Naive thymus-derived CD4-positive, alpha-beta T cell (primary cell): ENCODE measurements at regions of chr15 and their contacts with region 1.

Region 1: GRCh38 chr15:74540761-74541493 is at the start of gene ARID3B:
- DNase-seq: peak; percentile 72 to 95 (median 90)
- ATAC-seq: peak; percentile 94
- H3K4me3 ChIP-seq: peak within 1 kb of the TSS; percentile 98
- H3K4me3 Mint-ChIP-seq: peak within 1 kb of the TSS; percentile 90 to 99 (median 98)
- H3K27ac ChIP-seq: peak within 1 kb of the TSS; percentile 87
- H3K27ac Mint-ChIP-seq: peak within 1 kb of the TSS; percentile 84 to 99 (median 94)
- H3K4me1 ChIP-seq: peaks cover 18 to 34% of the 10 kb centered on the region in 2 donors
- H3K4me1 Mint-ChIP-seq: peaks cover 46 to 64% (median 55%) of the 10 kb centered on the region in 7 donors
- H3K27me3 ChIP-seq: no peaks in the 10 kb centered on the region
- H3K27me3 Mint-ChIP-seq: no peaks in the 10 kb centered on the region
- total RNA-seq, gene ARID3B: 29.5 to 45.4 (median 36.8) TPM

Region 2: DNA sequence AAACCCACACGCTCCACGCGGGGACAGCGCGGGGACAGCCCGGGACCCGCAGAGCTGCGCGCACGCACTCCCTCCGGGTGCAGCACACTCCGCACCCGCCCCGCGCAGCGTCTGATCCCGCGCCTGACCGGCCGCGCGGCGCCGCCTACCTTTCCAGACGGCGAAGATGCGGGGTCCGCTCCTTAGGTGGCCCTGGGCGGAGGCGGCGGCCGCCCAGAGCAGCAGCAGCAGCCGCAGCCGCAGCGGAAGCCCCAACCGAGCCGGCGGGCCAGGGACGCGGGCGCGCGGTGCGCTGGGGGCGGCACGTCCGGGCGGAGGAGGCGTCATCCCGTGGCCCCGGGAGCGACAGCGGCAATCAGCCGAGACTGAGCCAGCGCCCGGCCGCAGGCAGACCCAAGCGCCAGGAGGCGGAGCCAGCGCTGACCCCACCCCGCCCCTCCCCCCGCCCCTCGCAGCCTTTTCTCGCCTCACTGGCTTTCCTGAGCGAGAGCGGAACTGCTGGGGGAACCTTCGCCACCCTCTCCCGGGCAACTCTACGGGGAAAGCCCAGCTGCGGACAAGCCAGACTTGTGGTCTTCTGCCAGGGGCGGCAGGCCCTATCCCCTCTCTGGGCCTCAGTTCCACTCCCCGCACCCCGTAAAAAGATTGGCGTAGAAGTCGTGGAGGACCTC is 107.2 kb before region 1 on chr15 and contains the start of gene SEMA7A:
- CTCF ChIA-PET with region 1: no interaction called
- POLR2A ChIA-PET with region 1: no interaction called
- intact Hi-C with region 1: loop called in 1 of 2 experiments (anchors 10 kb)
- DNase-seq: peak; percentile 32 to 90 (median 53)
- ATAC-seq: peak; percentile 87
- H3K4me3 ChIP-seq: peak within 1 kb of the TSS; percentile 50
- H3K4me3 Mint-ChIP-seq: peak within 1 kb of the TSS; percentile 72 to 88 (median 78)
- H3K27ac ChIP-seq: no peak within 1 kb of the TSS
- H3K27ac Mint-ChIP-seq: peak within 1 kb of the TSS in 4 of 9 donors; percentile 65 to 89 (median 72)
- H3K4me1 ChIP-seq: peaks cover 6 to 35% of the 10 kb centered on the region in 2 donors
- H3K4me1 Mint-ChIP-seq: peaks cover 7 to 57% (median 16%) of the 10 kb centered on the region in 7 donors
- H3K27me3 ChIP-seq: no peaks in the 10 kb centered on the region
- H3K27me3 Mint-ChIP-seq: peaks cover 0 to 3% (median 0%) of the 10 kb centered on the region in 5 donors
- total RNA-seq, gene SEMA7A: 1.6 to 15.7 (median 5.0) TPM

Region 3: DNA sequence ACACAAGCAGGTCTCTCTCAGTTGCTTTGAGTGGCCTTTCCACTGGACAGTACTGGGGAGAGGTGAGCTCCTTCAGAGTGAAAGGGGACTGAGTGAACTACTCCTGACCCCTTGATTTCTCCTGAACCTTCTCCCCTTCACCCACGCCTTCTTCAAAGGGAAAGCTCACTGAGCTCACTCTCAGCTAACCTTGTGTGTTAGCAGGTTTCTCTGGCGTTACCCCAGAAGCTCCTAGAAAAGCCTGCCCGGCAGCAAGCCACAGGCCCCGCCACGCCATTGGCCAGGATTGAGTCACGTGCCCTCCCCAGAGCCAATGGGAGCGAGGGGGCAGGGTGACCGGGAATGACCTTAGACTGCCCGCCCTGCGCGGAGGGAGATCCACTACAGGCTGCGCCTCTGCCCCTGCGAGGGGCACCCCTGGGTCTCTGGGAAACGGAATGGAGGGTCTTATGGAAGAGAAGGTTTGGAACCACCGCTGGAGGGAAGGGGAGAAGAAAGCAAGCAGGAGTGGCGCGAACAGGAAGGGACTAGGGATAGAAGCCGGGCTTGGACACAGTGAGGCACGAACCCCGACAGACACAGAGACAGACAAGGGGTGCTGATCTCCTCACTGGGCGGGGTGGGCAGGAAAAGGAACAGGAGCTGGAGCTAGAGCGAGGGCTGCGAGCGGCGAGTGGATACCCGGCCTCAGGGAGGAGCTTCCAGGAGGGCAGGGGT is 57.4 kb after region 1 on chr15:
- CTCF ChIA-PET with region 1: no interaction called
- POLR2A ChIA-PET with region 1: interaction called, 5 read pairs
- intact Hi-C with region 1: loop called (anchors 1 kb)
- DNase-seq: peak; percentile 71 to 91 (median 79)
- ATAC-seq: peak; percentile 98
- H3K4me3 ChIP-seq: peak overlapping the region; percentile 83
- H3K4me3 Mint-ChIP-seq: peak overlapping the region; percentile 90 to 100 (median 98)
- H3K27ac ChIP-seq: peak overlapping the region; percentile 79
- H3K27ac Mint-ChIP-seq: peak overlapping the region; percentile 89 to 99 (median 98)
- H3K4me1 ChIP-seq: peaks cover 6 to 13% of the 10 kb centered on the region in 2 donors
- H3K4me1 Mint-ChIP-seq: peaks cover 16 to 24% (median 21%) of the 10 kb centered on the region in 7 donors
- H3K27me3 ChIP-seq: no peaks in the 10 kb centered on the region
- H3K27me3 Mint-ChIP-seq: no peaks in the 10 kb centered on the region

Region 4: GRCh38 chr15:74787251-74788041 is 246.5 kb after region 1 on chr15:
- CTCF ChIA-PET with region 1: no interaction called
- POLR2A ChIA-PET with region 1: no interaction called
- intact Hi-C with region 1: loop called (anchors 5 kb)
- DNase-seq: peak; percentile 69 to 97 (median 96)
- ATAC-seq: peak; percentile 85
- H3K4me3 ChIP-seq: peak overlapping the region; percentile 85
- H3K4me3 Mint-ChIP-seq: peak overlapping the region; percentile 87 to 97 (median 93)
- H3K27ac ChIP-seq: peak overlapping the region; percentile 92
- H3K27ac Mint-ChIP-seq: peak overlapping the region; percentile 95 to 99 (median 98)
- H3K4me1 ChIP-seq: peaks cover 66 to 72% of the 10 kb centered on the region in 2 donors
- H3K4me1 Mint-ChIP-seq: peaks cover 57 to 78% (median 75%) of the 10 kb centered on the region in 7 donors
- H3K27me3 ChIP-seq: no peaks in the 10 kb centered on the region
- H3K27me3 Mint-ChIP-seq: no peaks in the 10 kb centered on the region

Region 5: GRCh38 chr15:74937596-74938296 is 396.8 kb after region 1 on chr15 and contains the start of gene COX5A:
- CTCF ChIA-PET with region 1: no interaction called
- POLR2A ChIA-PET with region 1: no interaction called
- intact Hi-C with region 1: loop called (anchors 2 to 10 kb)
- DNase-seq: peak; percentile 86 to 94 (median 92)
- ATAC-seq: peak; percentile 99
- H3K4me3 ChIP-seq: peak within 1 kb of the TSS; percentile 62
- H3K4me3 Mint-ChIP-seq: peak within 1 kb of the TSS; percentile 87 to 97 (median 94)
- H3K27ac ChIP-seq: peak within 1 kb of the TSS; percentile 85
- H3K27ac Mint-ChIP-seq: peak within 1 kb of the TSS; percentile 85 to 95 (median 91)
- H3K4me1 ChIP-seq: peaks cover 0 to 17% of the 10 kb centered on the region in 2 donors
- H3K4me1 Mint-ChIP-seq: peaks cover 16 to 38% (median 26%) of the 10 kb centered on the region in 7 donors
- H3K27me3 ChIP-seq: no peaks in the 10 kb centered on the region
- H3K27me3 Mint-ChIP-seq: peaks cover 0 to 3% (median 0%) of the 10 kb centered on the region in 5 donors
- total RNA-seq, gene COX5A: 44.4 to 210 (median 59.2) TPM